ENCODE measurements at regions of chr3 and their contacts with region 1.

Region 1: DNA sequence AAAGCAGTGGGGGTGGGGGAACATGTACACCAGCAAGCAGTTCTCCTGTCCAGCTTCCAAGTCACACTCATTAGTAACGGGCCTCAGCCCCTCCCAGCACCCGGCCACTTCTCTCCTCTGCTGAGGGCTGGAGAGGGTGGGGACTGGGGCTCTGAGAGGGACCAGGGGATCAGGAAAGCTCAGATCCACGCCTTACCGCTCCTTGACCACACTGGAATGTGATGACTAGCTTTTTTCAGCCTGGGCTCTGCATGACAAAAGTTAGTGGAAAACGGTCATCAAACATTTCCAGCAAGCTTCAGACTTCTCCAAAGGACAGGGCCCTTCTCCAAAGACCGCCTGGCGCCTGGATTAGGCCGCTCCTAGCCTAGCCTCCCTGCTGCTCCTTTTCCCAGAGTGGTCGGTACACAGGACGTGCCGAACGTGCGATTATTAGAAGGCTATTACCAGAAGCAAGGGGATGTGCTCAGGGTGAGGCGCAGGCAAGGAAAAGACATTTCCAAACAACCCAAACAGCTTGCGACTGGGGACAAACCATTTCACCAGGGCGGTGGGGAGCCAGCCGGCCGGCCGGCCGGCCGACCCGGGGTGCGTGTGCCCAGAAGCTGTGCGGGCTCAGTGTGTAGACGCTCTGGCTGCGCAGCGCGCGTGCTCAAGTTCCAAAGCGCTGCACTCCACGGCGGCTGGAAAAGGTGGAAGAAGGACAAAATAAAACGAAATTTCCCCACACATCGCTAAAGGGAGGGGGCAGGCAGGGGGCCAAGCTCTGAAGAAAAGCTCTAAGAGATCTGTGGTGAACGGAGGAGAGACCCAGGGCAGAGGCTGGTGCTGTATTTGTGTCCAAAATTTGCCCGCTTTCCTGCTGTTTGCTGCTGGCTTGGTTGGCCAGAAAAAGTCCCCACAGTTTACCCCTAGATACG is 51.0 kb upstream of the SSR3 start:
- DNase-seq: peak; percentile 21 to 35 (median 29)
- H3K4me3 ChIP-seq: peak overlapping the region; percentile 49 to 77 (median 57)
- H3K4me3 Mint-ChIP-seq: peak overlapping the region; percentile 86 to 93
- H3K27ac ChIP-seq: peak overlapping the region; percentile 84 to 87
- H3K27ac Mint-ChIP-seq: peak overlapping the region; percentile 85 to 96 (median 91)
- H3K4me1 ChIP-seq: peaks cover 26 to 28% of the 10 kb centered on the region in 2 donors
- H3K4me1 Mint-ChIP-seq: peaks cover 38% of the 10 kb centered on the region
- H3K27me3 ChIP-seq: no peaks in the 10 kb centered on the region
- H3K27me3 Mint-ChIP-seq: no peaks in the 10 kb centered on the region
- CTCF ChIP-seq: no peak

Region 2: GRCh38 chr3:156050918-156051317 is 555.0 kb before region 1 on chr3:
- intact Hi-C with region 1: no loop called
- DNase-seq: no peak
- H3K4me3 ChIP-seq: no peak overlapping the region
- H3K4me3 Mint-ChIP-seq: no peak overlapping the region
- H3K27ac ChIP-seq: no peak overlapping the region
- H3K27ac Mint-ChIP-seq: no peak overlapping the region
- H3K4me1 ChIP-seq: no peaks in the 10 kb centered on the region
- H3K4me1 Mint-ChIP-seq: no peaks in the 10 kb centered on the region
- H3K27me3 ChIP-seq: no peaks in the 10 kb centered on the region
- H3K27me3 Mint-ChIP-seq: peaks cover 0 to 8% (median 2%) of the 10 kb centered on the region in 3 donors
- CTCF ChIP-seq: no peak

Region 3: GRCh38 chr3:156664831-156665178 is 58.9 kb after region 1 on chr3:
- intact Hi-C with region 1: loop called in 1 of 2 experiments (anchors 10 kb)
- DNase-seq: no peak
- H3K4me3 ChIP-seq: peak overlapping the region in 1 of 3 experiments; percentile 50
- H3K4me3 Mint-ChIP-seq: peak overlapping the region in 1 of 2 donors; percentile 59
- H3K27ac ChIP-seq: peak overlapping the region in 1 of 2 donors; percentile 80
- H3K27ac Mint-ChIP-seq: peak overlapping the region; percentile 73 to 93 (median 90)
- H3K4me1 ChIP-seq: peaks cover 65 to 82% of the 10 kb centered on the region in 2 donors
- H3K4me1 Mint-ChIP-seq: peaks cover 74% of the 10 kb centered on the region
- H3K27me3 ChIP-seq: no peaks in the 10 kb centered on the region
- H3K27me3 Mint-ChIP-seq: no peaks in the 10 kb centered on the region
- CTCF ChIP-seq: no peak

Region 4: GRCh38 chr3:157182881-157183280 is 576.9 kb after region 1 on chr3:
- intact Hi-C with region 1: no loop called
- DNase-seq: no peak
- H3K4me3 ChIP-seq: no peak overlapping the region
- H3K4me3 Mint-ChIP-seq: no peak overlapping the region
- H3K27ac ChIP-seq: no peak overlapping the region
- H3K27ac Mint-ChIP-seq: peak overlapping the region in 1 of 7 donors; percentile 11
- H3K4me1 ChIP-seq: no peaks in the 10 kb centered on the region
- H3K4me1 Mint-ChIP-seq: peaks cover 4% of the 10 kb centered on the region
- H3K27me3 ChIP-seq: no peaks in the 10 kb centered on the region
- H3K27me3 Mint-ChIP-seq: no peaks in the 10 kb centered on the region
- CTCF ChIP-seq: no peak

Measured in CD14-positive monocyte (primary cell).